ENCODE measurements at regions of chr12 and their contacts with region 1.

Region 1: GRCh38 chr12:101839324-101840283 is 8.8 kb upstream of the GNPTAB start:
- DNase-seq: peak; percentile 29 to 77 (median 67)
- ATAC-seq: peak; percentile 88
- H3K4me3 ChIP-seq: no peak overlapping the region
- H3K4me3 Mint-ChIP-seq: peak overlapping the region in 2 of 10 donors; percentile 6 to 27
- H3K27ac ChIP-seq: no peak overlapping the region
- H3K27ac Mint-ChIP-seq: no peak overlapping the region
- H3K4me1 ChIP-seq: peaks cover 8 to 13% of the 10 kb centered on the region in 2 donors
- H3K4me1 Mint-ChIP-seq: peaks cover 6 to 12% (median 10%) of the 10 kb centered on the region in 7 donors
- H3K27me3 ChIP-seq: no peaks in the 10 kb centered on the region
- H3K27me3 Mint-ChIP-seq: peaks cover 0 to 6% (median 0%) of the 10 kb centered on the region in 5 donors

Region 2: DNA sequence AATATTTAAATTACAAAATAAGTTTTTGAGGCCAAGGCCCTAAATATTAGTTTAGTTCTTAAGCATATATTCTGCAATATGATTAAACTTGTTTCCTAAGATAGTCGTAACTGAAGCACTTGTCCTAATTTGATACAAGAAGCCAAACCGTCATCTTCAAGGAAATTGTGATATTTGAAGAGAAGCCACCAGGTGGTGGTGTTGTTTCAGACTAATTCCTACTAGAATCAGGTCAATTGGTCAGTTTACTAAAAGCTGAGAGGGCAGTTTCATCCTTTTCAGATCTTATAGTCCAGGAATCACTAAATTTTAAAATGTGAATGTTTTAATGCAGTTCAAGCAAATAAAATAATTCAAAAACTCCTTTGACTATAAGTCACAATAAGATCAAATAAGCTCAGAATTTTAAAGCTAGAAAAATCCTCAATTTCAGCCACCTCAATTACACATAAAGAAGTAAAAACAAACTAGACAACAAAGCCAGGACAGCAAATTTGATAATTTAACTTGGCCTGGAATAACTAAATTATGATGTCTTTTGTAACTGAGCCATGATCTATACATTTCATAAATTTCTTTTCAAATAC is 425.0 kb before region 1 on chr12:
- CTCF ChIA-PET with region 1: interaction called, 5 read pairs
- POLR2A ChIA-PET with region 1: no interaction called
- intact Hi-C with region 1: loop called (anchors 1 kb)
- DNase-seq: peak in 5 of 9 donors; percentile 11 to 23 (median 12)
- ATAC-seq: peak; percentile 40
- H3K4me3 ChIP-seq: no peak overlapping the region
- H3K4me3 Mint-ChIP-seq: no peak overlapping the region
- H3K27ac ChIP-seq: no peak overlapping the region
- H3K27ac Mint-ChIP-seq: no peak overlapping the region
- H3K4me1 ChIP-seq: no peaks in the 10 kb centered on the region
- H3K4me1 Mint-ChIP-seq: peaks cover 0 to 5% (median 0%) of the 10 kb centered on the region in 7 donors
- H3K27me3 ChIP-seq: no peaks in the 10 kb centered on the region
- H3K27me3 Mint-ChIP-seq: peaks cover 0 to 29% (median 2%) of the 10 kb centered on the region in 5 donors

Region 3: DNA sequence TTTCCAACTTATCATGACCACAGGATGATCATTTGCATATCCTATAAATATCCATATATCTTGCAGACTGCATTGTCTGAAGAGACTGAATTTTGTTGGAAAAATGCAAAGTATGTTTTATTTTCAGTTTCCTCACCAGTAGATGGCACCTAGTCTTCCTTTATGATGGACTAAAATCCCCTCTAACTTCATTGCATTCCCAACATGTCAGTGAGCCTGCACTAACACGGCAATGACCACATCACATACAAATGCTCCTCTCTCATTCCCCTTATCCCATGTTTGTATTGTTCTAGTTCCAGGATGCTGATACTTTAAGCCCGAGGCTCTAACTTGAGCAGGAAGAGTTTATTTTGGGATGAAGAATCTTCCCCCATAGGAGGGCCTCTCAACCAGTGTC is 269.6 kb before region 1 on chr12:
- CTCF ChIA-PET with region 1: interaction called, 3 read pairs
- POLR2A ChIA-PET with region 1: no interaction called
- intact Hi-C with region 1: loop called in 1 of 2 experiments (anchors 2 kb)
- DNase-seq: no peak
- ATAC-seq: no peak
- H3K4me3 ChIP-seq: no peak overlapping the region
- H3K4me3 Mint-ChIP-seq: no peak overlapping the region
- H3K27ac ChIP-seq: no peak overlapping the region
- H3K27ac Mint-ChIP-seq: no peak overlapping the region
- H3K4me1 ChIP-seq: no peaks in the 10 kb centered on the region
- H3K4me1 Mint-ChIP-seq: peaks cover 0 to 7% (median 4%) of the 10 kb centered on the region in 7 donors
- H3K27me3 ChIP-seq: peaks cover 0 to 2% of the 10 kb centered on the region in 2 donors
- H3K27me3 Mint-ChIP-seq: peaks cover 0 to 23% (median 20%) of the 10 kb centered on the region in 5 donors

Region 4: GRCh38 chr12:101670007-101670687 is 169.5 kb before region 1 on chr12:
- CTCF ChIA-PET with region 1: interaction called, 3 read pairs
- POLR2A ChIA-PET with region 1: no interaction called
- intact Hi-C with region 1: loop called (anchors 2 kb)
- DNase-seq: peak in 7 of 9 donors; percentile 30 to 59 (median 54)
- ATAC-seq: peak; percentile 88
- H3K4me3 ChIP-seq: no peak overlapping the region
- H3K4me3 Mint-ChIP-seq: peak overlapping the region in 4 of 10 donors; percentile 30 to 44 (median 39)
- H3K27ac ChIP-seq: no peak overlapping the region
- H3K27ac Mint-ChIP-seq: peak overlapping the region in 8 of 9 donors; percentile 10 to 71 (median 40)
- H3K4me1 ChIP-seq: peaks cover 4 to 18% of the 10 kb centered on the region in 2 donors
- H3K4me1 Mint-ChIP-seq: peaks cover 13 to 28% (median 21%) of the 10 kb centered on the region in 7 donors
- H3K27me3 ChIP-seq: no peaks in the 10 kb centered on the region
- H3K27me3 Mint-ChIP-seq: peaks cover 5 to 15% (median 9%) of the 10 kb centered on the region in 5 donors

Region 5: DNA sequence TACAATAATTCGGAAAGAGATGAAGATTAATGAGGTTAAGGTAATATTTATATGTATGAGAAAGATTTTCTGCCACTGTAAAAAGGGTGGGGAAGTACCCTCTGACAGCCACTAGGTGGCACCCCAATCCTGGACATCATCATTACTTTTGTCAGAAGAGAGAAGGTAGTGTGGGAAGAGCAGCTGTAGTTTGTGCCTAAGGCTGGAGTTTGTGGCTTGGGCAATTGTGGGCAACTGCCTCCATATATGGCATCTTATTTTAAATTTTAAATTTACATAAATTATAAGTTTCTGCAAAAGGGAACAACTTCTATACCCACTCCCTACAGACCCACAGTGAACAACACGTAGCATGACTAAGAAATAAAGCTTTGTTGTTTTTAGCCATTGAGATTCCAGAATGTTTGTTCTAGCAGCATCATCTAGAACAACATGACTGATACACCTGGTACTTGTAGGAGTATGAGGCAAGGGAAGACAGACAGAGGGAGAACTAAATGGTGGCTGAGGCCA is 65.9 kb before region 1 on chr12:
- CTCF ChIA-PET with region 1: interaction called, 113 read pairs
- POLR2A ChIA-PET with region 1: interaction called, 10 read pairs
- intact Hi-C with region 1: loop called (anchors 1 kb)
- DNase-seq: peak; percentile 37 to 76 (median 72)
- ATAC-seq: peak; percentile 94
- H3K4me3 ChIP-seq: no peak overlapping the region
- H3K4me3 Mint-ChIP-seq: no peak overlapping the region
- H3K27ac ChIP-seq: no peak overlapping the region
- H3K27ac Mint-ChIP-seq: peak overlapping the region in 2 of 9 donors; percentile 25 to 65
- H3K4me1 ChIP-seq: no peaks in the 10 kb centered on the region
- H3K4me1 Mint-ChIP-seq: peaks cover 0 to 50% (median 9%) of the 10 kb centered on the region in 7 donors
- H3K27me3 ChIP-seq: no peaks in the 10 kb centered on the region
- H3K27me3 Mint-ChIP-seq: no peaks in the 10 kb centered on the region

Region 6: DNA sequence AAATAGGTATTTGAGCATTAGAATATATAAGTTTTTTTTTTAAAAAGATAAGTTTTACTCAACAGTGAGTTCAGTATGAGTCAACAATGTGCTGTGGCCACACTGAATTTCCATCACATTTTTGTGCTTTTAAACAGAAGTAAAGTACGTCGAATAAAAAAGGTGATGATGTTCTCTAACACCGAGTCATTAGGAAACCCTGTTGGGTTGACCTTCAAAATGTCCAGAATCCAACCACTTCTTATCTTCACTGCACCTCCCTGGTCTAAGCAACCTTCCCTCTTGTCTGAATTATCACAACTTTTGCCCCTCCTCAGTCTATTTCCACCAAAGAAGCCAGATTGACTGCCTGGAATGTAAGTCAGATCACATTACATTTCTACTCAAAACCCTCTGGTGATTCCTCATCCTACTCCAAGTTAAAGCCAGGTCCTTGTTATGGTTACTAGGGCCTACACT is 57.3 kb before region 1 on chr12:
- CTCF ChIA-PET with region 1: interaction called, 27 read pairs
- POLR2A ChIA-PET with region 1: interaction called, 3 read pairs
- intact Hi-C with region 1: no loop called
- DNase-seq: no peak
- ATAC-seq: no peak
- H3K4me3 ChIP-seq: no peak overlapping the region
- H3K4me3 Mint-ChIP-seq: no peak overlapping the region
- H3K27ac ChIP-seq: no peak overlapping the region
- H3K27ac Mint-ChIP-seq: peak overlapping the region in 3 of 9 donors; percentile 11 to 61 (median 29)
- H3K4me1 ChIP-seq: no peaks in the 10 kb centered on the region
- H3K4me1 Mint-ChIP-seq: peaks cover 0 to 40% (median 0%) of the 10 kb centered on the region in 7 donors
- H3K27me3 ChIP-seq: no peaks in the 10 kb centered on the region
- H3K27me3 Mint-ChIP-seq: no peaks in the 10 kb centered on the region

Measured in naive thymus-derived CD4-positive, alpha-beta T cell (primary cell).